CD14-positive monocyte (primary cell): ENCODE measurements at regions of chr1 and their contacts with region 1.

Region 1: GRCh38 chr1:114986286-114986685 is 43.3 kb upstream of the TSHB start:
- DNase-seq: no peak
- H3K4me3 ChIP-seq: no peak overlapping the region
- H3K4me3 Mint-ChIP-seq: no peak overlapping the region
- H3K27ac ChIP-seq: no peak overlapping the region
- H3K27ac Mint-ChIP-seq: no peak overlapping the region
- H3K4me1 ChIP-seq: no peaks in the 10 kb centered on the region
- H3K4me1 Mint-ChIP-seq: no peaks in the 10 kb centered on the region
- H3K27me3 ChIP-seq: no peaks in the 10 kb centered on the region
- H3K27me3 Mint-ChIP-seq: peaks cover 0 to 10% (median 2%) of the 10 kb centered on the region in 3 donors
- CTCF ChIP-seq: no peak

Region 2: GRCh38 chr1:115052454-115053083 is 66.3 kb after region 1 on chr1:
- intact Hi-C with region 1: loop called in 1 of 2 experiments (anchors 10 kb)
- DNase-seq: peak; percentile 29 to 64 (median 43)
- H3K4me3 ChIP-seq: no peak overlapping the region
- H3K4me3 Mint-ChIP-seq: no peak overlapping the region
- H3K27ac ChIP-seq: no peak overlapping the region
- H3K27ac Mint-ChIP-seq: no peak overlapping the region
- H3K4me1 ChIP-seq: peaks cover 7 to 18% of the 10 kb centered on the region in 2 donors
- H3K4me1 Mint-ChIP-seq: peaks cover 2% of the 10 kb centered on the region
- H3K27me3 ChIP-seq: no peaks in the 10 kb centered on the region
- H3K27me3 Mint-ChIP-seq: no peaks in the 10 kb centered on the region
- CTCF ChIP-seq: peak; percentile 93

Region 3: DNA sequence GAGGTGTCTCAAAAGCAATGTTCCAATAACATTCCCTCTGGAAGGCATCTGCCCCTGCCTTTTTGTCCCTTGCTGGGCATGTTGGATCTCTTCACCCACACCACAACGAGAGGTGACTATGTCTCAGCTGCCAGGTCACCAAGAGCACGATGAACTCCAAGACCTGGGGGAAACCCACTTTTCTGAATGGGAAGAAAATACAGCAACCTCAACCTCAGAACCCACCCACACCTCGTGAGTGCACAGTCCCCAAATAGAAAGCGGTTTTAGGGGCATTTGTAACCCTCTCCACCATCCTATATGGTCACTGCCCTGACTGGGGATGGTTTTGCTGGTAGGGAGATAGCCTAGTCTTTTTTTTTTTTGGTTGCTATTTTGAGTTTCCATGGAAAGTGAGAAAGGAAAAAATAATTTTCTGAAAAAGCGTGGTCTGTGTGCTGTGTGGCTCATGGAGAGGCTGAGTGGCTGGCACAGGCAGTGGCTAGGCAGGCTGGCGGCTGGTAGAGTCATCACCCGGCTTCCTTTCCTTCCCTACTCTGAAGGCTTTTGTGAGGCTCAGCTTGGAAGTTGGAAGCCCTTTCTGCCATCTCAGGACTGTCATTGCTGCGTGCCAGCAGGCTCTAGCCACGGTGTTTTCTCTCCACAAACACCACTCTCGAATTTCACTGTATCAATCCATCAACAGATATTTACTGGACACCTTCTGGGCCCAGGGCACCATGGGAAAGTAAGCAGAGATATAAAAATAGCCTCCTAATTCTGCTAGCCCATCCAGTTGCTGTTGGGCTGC is 87.2 kb after region 1 on chr1:
- intact Hi-C with region 1: no loop called
- DNase-seq: no peak
- H3K4me3 ChIP-seq: no peak overlapping the region
- H3K4me3 Mint-ChIP-seq: no peak overlapping the region
- H3K27ac ChIP-seq: no peak overlapping the region
- H3K27ac Mint-ChIP-seq: no peak overlapping the region
- H3K4me1 ChIP-seq: peaks cover 0 to 13% of the 10 kb centered on the region in 2 donors
- H3K4me1 Mint-ChIP-seq: peaks cover 16% of the 10 kb centered on the region
- H3K27me3 ChIP-seq: no peaks in the 10 kb centered on the region
- H3K27me3 Mint-ChIP-seq: peaks cover 1 to 6% (median 1%) of the 10 kb centered on the region in 3 donors
- CTCF ChIP-seq: no peak